HEK293 (cell line): ENCODE measurements at regions of chr3 and their contacts with region 1.

Region 1: GRCh38 chr3:149936812-149937233 is 33.9 kb downstream of the PFN2 start:
- H3K4me3 ChIP-seq: no peak overlapping the region
- H3K27ac ChIP-seq: no peak overlapping the region
- H3K4me1 ChIP-seq: no peaks in the 10 kb centered on the region
- CTCF ChIP-seq: peak; percentile 66

Region 2: GRCh38 chr3:150216041-150216811 is 279.4 kb after region 1 on chr3:
- CTCF ChIA-PET with region 1: interaction called, 16 read pairs
- POLR2A ChIA-PET with region 1: no interaction called
- H3K4me3 ChIP-seq: peak overlapping the region; percentile 14; the same call in 1 of the 2 replicates
- H3K27ac ChIP-seq: peak overlapping the region; percentile 37; the same call in 1 of the 2 replicates
- H3K4me1 ChIP-seq: no peaks in the 10 kb centered on the region; the same call in 1 of the 2 replicates
- CTCF ChIP-seq: no peak